ENCODE measurements at regions of chr4 and their contacts with region 1.

Region 1: DNA sequence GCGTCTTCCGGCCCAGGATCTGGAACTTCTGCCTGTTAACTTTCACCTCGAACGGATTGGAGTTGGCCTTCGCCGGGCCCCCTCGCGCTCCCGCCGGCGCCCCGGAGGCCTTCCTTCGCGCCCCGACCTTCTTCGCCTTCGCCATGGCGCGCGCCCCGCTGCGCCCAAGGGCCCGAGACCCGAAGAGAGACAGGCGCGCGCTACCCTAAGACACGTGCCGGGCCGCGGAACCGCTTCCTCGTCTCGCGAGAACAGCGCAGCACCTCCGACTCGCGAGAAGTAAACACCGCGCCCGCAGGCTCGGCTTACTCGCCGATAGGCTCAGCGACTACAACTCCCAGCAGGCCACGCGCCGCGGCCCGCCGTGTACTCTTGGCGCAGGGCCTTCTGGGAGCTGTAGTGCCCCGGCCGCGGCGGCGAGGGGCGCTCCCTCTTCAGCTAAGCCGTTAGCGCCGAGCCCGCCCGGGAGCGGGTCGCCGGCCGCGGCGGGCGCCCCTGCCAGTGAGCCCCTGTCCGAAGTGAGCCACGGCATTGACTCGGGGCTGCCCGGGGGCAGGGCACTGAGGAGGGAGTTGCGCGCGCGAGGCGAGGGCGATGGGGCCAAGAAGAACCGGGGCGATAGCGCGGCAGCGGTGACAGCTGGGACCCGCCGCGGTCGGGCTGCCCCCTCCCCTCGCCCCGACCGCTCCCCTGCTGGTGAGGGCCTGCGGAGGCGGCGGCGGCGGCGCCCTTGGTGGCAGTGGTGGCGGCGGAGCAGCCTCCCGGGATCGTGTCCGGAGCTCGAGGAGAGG is at the starts of genes GRK4 and NOP14:
- DNase-seq: peak; percentile 91 to 98 (median 96)
- ATAC-seq: peak; percentile 97
- H3K4me3 ChIP-seq: peak within 1 kb of the TSS; percentile 98
- H3K4me3 Mint-ChIP-seq: peak within 1 kb of the TSS; percentile 82 to 95 (median 90)
- H3K27ac ChIP-seq: peak within 1 kb of the TSS; percentile 84
- H3K27ac Mint-ChIP-seq: peak within 1 kb of the TSS; percentile 67 to 93 (median 85)
- H3K4me1 ChIP-seq: peaks cover 18 to 19% of the 10 kb centered on the region in 2 donors
- H3K4me1 Mint-ChIP-seq: peaks cover 20 to 42% (median 35%) of the 10 kb centered on the region in 7 donors
- H3K27me3 ChIP-seq: no peaks in the 10 kb centered on the region
- H3K27me3 Mint-ChIP-seq: peaks cover 0 to 2% (median 0%) of the 10 kb centered on the region in 5 donors
- total RNA-seq, gene GRK4: 1.7 to 4.0 (median 2.8) TPM
- total RNA-seq, gene NOP14: 23.1 to 59.8 (median 43.9) TPM

Region 2: DNA sequence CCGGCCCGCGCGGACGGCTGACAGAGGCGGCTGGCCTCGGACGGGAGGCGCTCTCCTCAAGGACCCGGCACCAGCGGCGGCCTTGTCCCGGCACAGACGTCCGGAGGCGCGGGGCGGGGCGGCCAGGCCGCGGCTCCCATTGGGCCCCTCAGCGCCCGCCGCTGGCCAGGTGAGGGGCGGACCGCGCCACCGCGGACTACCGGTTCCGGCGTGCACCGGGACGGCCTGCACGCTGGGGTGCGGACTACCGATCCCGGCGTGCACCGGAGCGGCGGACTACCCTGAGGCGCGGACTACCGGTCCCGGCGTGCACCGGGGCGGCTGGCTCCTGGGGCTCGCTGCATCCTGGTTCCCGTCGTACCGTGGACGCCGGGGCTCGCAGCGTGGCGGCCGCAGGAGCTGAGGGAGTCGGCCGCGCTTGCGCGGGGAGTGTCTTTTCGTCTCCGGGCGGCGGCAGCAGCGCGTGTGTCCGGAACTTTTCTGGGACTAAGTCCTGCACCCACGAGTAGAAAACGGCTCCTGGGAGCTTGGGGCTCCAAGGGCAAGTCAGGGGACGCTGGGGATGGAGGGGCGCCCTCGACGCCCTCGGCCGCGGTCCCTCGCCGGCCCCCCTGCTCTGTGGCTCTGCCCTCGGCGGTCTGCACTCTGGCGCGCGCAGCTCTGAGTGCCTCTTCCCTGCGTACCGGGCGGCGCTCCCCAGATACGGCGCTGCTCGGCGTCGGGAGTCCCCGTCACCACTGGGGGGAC is 1107.2 kb before region 1 on chr4 and contains the start of gene LETM1:
- CTCF ChIA-PET with region 1: no interaction called
- POLR2A ChIA-PET with region 1: no interaction called
- intact Hi-C with region 1: loop called in 1 of 2 experiments (anchors 1 kb)
- DNase-seq: peak; percentile 79 to 96 (median 88)
- ATAC-seq: peak; percentile 98
- H3K4me3 ChIP-seq: peak within 1 kb of the TSS; percentile 86
- H3K4me3 Mint-ChIP-seq: peak within 1 kb of the TSS; percentile 67 to 88 (median 83)
- H3K27ac ChIP-seq: peak within 1 kb of the TSS; percentile 70
- H3K27ac Mint-ChIP-seq: peak within 1 kb of the TSS in 8 of 9 donors; percentile 17 to 80 (median 48)
- H3K4me1 ChIP-seq: peaks cover 10 to 14% of the 10 kb centered on the region in 2 donors
- H3K4me1 Mint-ChIP-seq: peaks cover 31 to 45% (median 41%) of the 10 kb centered on the region in 7 donors
- H3K27me3 ChIP-seq: no peaks in the 10 kb centered on the region
- H3K27me3 Mint-ChIP-seq: no peaks in the 10 kb centered on the region
- total RNA-seq, gene LETM1: 29.5 to 56.4 (median 36.0) TPM

Region 3: GRCh38 chr4:2468445-2469192 is 494.8 kb before region 1 on chr4 and contains the start of gene RNF4:
- CTCF ChIA-PET with region 1: no interaction called
- POLR2A ChIA-PET with region 1: interaction called, 6 read pairs
- intact Hi-C with region 1: loop called (anchors 1 to 2 kb)
- DNase-seq: peak; percentile 77 to 97 (median 96)
- ATAC-seq: peak; percentile 93
- H3K4me3 ChIP-seq: peak within 1 kb of the TSS; percentile 70
- H3K4me3 Mint-ChIP-seq: peak within 1 kb of the TSS; percentile 90 to 98 (median 95)
- H3K27ac ChIP-seq: peak within 1 kb of the TSS; percentile 94
- H3K27ac Mint-ChIP-seq: peak within 1 kb of the TSS; percentile 95 to 98 (median 98)
- H3K4me1 ChIP-seq: peaks cover 31 to 37% of the 10 kb centered on the region in 2 donors
- H3K4me1 Mint-ChIP-seq: peaks cover 40 to 66% (median 53%) of the 10 kb centered on the region in 7 donors
- H3K27me3 ChIP-seq: no peaks in the 10 kb centered on the region
- H3K27me3 Mint-ChIP-seq: peaks cover 0 to 6% (median 0%) of the 10 kb centered on the region in 5 donors
- total RNA-seq, gene RNF4: 80.7 to 101 (median 91.8) TPM

Region 4: DNA sequence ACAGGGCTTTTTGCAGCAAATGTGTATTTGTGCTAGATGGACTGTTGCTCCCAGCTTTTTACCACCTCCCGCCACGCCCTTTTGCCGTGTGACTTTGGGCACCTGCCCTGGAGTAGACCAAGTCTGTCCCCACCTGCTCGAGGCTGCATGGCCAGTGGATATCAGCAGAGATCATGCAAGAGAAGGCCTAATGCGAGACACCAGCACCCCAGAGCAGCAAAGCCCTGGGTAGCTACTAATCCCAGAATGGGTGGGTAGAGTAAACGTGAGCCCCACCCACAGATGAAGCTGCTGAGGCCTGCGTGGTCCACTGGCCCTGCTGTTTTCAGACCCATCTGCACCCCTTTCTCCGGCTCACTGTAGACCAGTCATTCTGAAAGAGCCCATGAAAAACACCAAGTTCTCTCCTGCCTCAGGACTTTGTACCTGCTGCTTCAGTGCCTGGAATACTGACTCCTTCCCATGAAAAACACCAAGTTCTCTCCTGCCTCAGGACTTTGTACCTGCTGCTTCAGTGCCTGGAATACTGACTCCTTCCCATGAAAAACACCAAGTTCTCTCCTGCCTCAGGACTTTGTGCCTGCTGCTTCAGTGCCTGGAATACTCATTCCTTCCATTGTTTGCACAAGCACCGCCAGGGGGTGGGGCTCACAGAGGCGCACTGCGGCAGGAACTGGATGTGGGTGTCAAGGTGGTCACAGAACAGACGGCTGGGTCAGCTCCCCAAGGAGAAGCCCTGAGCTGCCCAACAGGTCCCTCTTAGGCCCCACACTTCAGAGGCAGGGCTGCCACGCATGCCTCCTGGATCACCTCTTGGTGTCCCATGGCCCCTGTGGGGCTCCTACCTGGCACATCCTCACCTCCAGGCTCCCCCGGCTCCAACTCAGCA is 202.1 kb before region 1 on chr4:
- CTCF ChIA-PET with region 1: no interaction called
- POLR2A ChIA-PET with region 1: no interaction called
- intact Hi-C with region 1: loop called (anchors 1 to 2 kb)
- DNase-seq: no peak
- ATAC-seq: no peak
- H3K4me3 ChIP-seq: no peak overlapping the region
- H3K4me3 Mint-ChIP-seq: no peak overlapping the region
- H3K27ac ChIP-seq: no peak overlapping the region
- H3K27ac Mint-ChIP-seq: peak overlapping the region in 4 of 9 donors; percentile 14 to 71 (median 54)
- H3K4me1 ChIP-seq: peaks cover 0 to 4% of the 10 kb centered on the region in 2 donors
- H3K4me1 Mint-ChIP-seq: peaks cover 0 to 15% (median 5%) of the 10 kb centered on the region in 7 donors
- H3K27me3 ChIP-seq: no peaks in the 10 kb centered on the region
- H3K27me3 Mint-ChIP-seq: no peaks in the 10 kb centered on the region

Region 5: DNA sequence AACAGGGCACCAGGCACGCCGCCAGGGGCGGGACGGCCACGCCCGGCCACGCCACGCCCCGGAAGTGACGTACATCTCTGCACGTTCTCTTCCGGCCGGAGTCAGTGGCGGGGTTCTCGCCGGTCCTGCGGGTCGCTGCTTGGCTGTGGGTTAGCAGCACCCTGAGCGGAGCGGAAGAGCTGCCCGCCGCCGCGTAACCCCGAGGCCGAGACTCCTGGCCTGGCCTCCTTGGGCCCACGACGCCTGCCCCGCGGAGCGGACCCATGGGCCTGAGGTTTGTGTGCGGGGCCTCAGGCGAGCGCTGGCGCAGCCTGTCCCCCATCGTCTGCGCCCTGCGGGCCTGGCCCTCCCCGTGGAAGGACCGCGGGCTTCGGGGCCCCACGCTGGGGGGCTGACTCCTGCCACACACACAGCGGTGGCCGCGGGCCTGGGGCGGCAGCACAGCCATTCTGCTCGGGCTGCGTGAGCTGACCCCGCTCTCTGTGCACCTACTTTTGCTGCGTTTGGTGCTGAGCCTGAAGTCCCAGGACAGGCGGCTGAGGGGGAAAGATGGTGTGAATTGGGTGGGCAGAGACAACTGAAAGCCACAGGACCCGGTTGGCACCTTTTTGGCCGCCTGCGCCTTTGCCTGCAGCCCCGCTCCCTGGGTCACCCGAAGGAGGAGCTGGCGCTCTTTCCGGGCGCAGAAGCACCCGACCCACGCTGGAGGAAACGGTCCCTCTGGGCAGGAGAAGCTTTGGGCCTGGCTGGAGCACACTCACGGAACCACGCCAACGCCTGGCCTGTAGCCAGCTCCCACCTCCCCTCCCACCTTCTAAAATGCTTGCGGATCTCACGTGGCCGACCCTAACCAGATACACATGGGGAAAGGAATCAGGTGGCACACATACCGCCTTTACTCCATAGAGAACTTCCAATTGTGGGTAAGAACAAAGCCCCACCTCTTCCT is 28.3 kb before region 1 on chr4:
- CTCF ChIA-PET with region 1: no interaction called
- POLR2A ChIA-PET with region 1: interaction called, 26 read pairs
- intact Hi-C with region 1: loop called (anchors 1 kb)
- DNase-seq: peak; percentile 90 to 99 (median 95)
- ATAC-seq: peak; percentile 81
- H3K4me3 ChIP-seq: peak overlapping the region; percentile 97
- H3K4me3 Mint-ChIP-seq: peak overlapping the region; percentile 76 to 91 (median 84)
- H3K27ac ChIP-seq: peak overlapping the region; percentile 92
- H3K27ac Mint-ChIP-seq: peak overlapping the region; percentile 67 to 91 (median 87)
- H3K4me1 ChIP-seq: peaks cover 38 to 46% of the 10 kb centered on the region in 2 donors
- H3K4me1 Mint-ChIP-seq: peaks cover 17 to 44% (median 37%) of the 10 kb centered on the region in 7 donors
- H3K27me3 ChIP-seq: no peaks in the 10 kb centered on the region
- H3K27me3 Mint-ChIP-seq: no peaks in the 10 kb centered on the region

Region 6: DNA sequence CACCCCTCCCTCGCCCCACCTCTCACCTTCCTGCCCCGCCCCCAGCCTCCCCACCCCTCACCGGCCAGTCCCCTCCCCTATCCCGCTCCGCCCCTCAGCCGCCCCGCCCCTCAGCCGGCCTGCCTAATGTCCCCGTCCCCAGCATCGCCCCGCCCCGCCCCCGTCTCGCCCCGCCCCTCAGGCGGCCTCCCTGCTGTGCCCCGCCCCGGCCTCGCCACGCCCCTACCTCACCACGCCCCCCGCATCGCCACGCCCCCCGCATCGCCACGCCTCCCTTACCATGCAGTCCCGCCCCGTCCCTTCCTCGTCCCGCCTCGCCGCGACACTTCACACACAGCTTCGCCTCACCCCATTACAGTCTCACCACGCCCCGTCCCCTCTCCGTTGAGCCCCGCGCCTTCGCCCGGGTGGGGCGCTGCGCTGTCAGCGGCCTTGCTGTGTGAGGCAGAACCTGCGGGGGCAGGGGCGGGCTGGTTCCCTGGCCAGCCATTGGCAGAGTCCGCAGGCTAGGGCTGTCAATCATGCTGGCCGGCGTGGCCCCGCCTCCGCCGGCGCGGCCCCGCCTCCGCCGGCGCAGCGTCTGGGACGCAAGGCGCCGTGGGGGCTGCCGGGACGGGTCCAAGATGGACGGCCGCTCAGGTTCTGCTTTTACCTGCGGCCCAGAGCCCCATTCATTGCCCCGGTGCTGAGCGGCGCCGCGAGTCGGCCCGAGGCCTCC is 110.9 kb after region 1 on chr4 and contains the starts of genes HTT and HTT-AS:
- CTCF ChIA-PET with region 1: no interaction called
- POLR2A ChIA-PET with region 1: interaction called, 5 read pairs
- intact Hi-C with region 1: loop called (anchors 1 kb)
- DNase-seq: peak; percentile 91 to 99 (median 96)
- ATAC-seq: peak; percentile 90
- H3K4me3 ChIP-seq: peak within 1 kb of the TSS; percentile 87
- H3K4me3 Mint-ChIP-seq: peak within 1 kb of the TSS; percentile 86 to 98 (median 90)
- H3K27ac ChIP-seq: peak within 1 kb of the TSS; percentile 89
- H3K27ac Mint-ChIP-seq: peak within 1 kb of the TSS; percentile 70 to 95 (median 93)
- H3K4me1 ChIP-seq: peaks cover 10 to 16% of the 10 kb centered on the region in 2 donors
- H3K4me1 Mint-ChIP-seq: peaks cover 17 to 35% (median 30%) of the 10 kb centered on the region in 7 donors
- H3K27me3 ChIP-seq: no peaks in the 10 kb centered on the region
- H3K27me3 Mint-ChIP-seq: no peaks in the 10 kb centered on the region
- total RNA-seq, gene HTT: 61.4 to 115 (median 72.5) TPM
- total RNA-seq, gene HTT-AS: not detected

Region 7: GRCh38 chr4:4575273-4576211 is 1612.2 kb after region 1 on chr4:
- CTCF ChIA-PET with region 1: no interaction called
- POLR2A ChIA-PET with region 1: no interaction called
- intact Hi-C with region 1: no loop called
- DNase-seq: peak; percentile 37 to 69 (median 60)
- ATAC-seq: peak; percentile 86
- H3K4me3 ChIP-seq: peak overlapping the region; percentile 68
- H3K4me3 Mint-ChIP-seq: peak overlapping the region; percentile 72 to 92 (median 84)
- H3K27ac ChIP-seq: peak overlapping the region; percentile 64
- H3K27ac Mint-ChIP-seq: peak overlapping the region in 7 of 9 donors; percentile 3 to 95 (median 60)
- H3K4me1 ChIP-seq: peaks cover 0 to 6% of the 10 kb centered on the region in 2 donors
- H3K4me1 Mint-ChIP-seq: peaks cover 10 to 22% (median 18%) of the 10 kb centered on the region in 7 donors
- H3K27me3 ChIP-seq: no peaks in the 10 kb centered on the region
- H3K27me3 Mint-ChIP-seq: peaks cover 0 to 10% (median 0%) of the 10 kb centered on the region in 5 donors